ENCODE measurements at regions of chr3 and their contacts with region 1.

Region 1: GRCh38 chr3:108438542-108438941 is 71.9 kb downstream of the MYH15 start:
- DNase-seq: no peak
- H3K4me3 Mint-ChIP-seq: no peak overlapping the region
- H3K27ac Mint-ChIP-seq: no peak overlapping the region
- H3K4me1 Mint-ChIP-seq: no peaks in the 10 kb centered on the region
- H3K27me3 Mint-ChIP-seq: no peaks in the 10 kb centered on the region

Region 2: DNA sequence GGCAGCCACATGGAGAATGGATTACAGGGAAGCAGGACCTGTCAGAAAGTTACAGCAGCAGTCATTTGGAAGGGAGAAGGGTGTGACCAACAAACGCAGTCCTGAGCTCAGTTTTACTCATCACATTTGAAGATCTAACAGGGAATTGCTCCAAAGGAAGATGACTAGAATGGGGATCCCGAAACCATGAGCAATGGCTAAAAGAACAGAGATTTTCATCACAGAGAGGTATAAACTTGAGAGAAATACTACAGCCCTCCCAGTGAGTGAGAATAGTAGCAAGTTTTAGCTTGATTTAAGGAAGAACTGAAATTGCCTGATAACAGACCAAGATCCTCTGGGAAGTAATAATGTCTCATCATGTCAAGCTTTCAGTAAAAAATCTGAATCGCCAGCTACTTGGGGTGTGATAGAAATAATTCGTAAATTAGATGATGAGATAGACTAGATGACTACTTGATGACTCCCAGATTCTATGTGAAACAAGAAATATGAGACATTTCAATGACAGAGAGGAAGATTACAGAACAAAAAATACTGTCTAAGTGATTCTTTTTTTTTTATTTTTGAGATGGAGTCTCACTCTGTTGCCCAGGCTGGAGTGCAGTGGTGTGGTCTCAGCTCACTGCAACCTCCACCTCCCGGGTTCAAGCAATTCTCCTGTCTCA is 364.6 kb before region 1 on chr3:
- CTCF ChIA-PET with region 1: no interaction called
- intact Hi-C with region 1: no loop called
- DNase-seq: no peak
- H3K4me3 Mint-ChIP-seq: no peak overlapping the region
- H3K27ac Mint-ChIP-seq: peak overlapping the region; percentile 32
- H3K4me1 Mint-ChIP-seq: peaks cover 77% of the 10 kb centered on the region
- H3K27me3 Mint-ChIP-seq: no peaks in the 10 kb centered on the region

Region 3: DNA sequence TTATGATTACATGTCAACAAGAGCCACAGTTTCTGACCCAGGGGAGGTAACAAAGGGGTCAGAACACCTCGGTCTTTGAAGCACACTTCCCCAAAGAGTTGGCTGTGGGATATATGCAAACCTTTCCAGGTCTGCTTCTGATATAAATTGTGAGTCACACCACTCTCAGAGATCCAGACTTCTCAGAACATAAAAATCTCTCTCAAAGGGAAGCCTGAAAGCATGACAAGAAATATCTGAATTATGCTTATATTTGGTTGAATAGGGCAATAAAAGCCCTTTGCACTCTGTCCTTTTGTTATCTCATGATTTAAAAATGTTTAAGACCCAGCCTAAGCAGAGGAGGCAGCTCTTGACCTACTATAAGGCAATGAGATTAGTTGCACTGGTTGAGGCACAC is 15.0 kb after region 1 on chr3:
- CTCF ChIA-PET with region 1: no interaction called
- intact Hi-C with region 1: loop called (anchors 2 kb)
- DNase-seq: no peak
- H3K4me3 Mint-ChIP-seq: no peak overlapping the region
- H3K27ac Mint-ChIP-seq: no peak overlapping the region
- H3K4me1 Mint-ChIP-seq: no peaks in the 10 kb centered on the region
- H3K27me3 Mint-ChIP-seq: peaks cover 5% of the 10 kb centered on the region

Measured in activated naive CD4-positive, alpha-beta T cell treated with anti-CD3 and anti-CD28 coated beads for 36 hours (primary cell).